ENCODE measurements at regions of chr6 and their contacts with region 1.

Region 1: GRCh38 chr6:139588076-139588639 is 213.7 kb upstream of the CITED2 start:
- DNase-seq: peak; percentile 28
- H3K4me3 ChIP-seq: no peak overlapping the region
- CTCF ChIP-seq: no peak

Region 2: GRCh38 chr6:139375232-139376016 is 212.7 kb before region 1 on chr6:
- in situ Hi-C with region 1: loop called (anchors 5 kb)
- DNase-seq: peak; percentile 97
- H3K4me3 ChIP-seq: peak overlapping the region; percentile 85
- CTCF ChIP-seq: peak; percentile 14

Region 3: DNA sequence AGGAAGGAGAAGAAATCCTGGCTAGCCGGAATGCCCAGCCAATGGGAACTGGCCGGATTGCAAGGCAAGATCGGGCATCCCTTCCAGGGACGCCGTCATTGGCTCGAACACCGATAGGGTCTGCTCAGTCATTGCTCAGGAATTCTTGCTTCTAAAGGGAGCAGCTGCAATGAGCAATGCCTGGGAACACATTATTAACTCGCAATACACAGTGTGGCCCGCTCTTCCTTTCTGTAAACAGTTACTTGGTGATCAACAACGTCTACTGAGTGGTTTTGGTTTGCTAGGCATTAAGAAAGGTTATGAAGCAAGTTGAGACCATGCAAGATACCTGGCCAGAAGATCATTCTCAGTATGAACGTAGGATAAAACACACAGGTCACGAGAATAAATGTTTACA is 48.3 kb before region 1 on chr6:
- in situ Hi-C with region 1: loop called (anchors 5 kb)
- DNase-seq: peak; percentile 76
- H3K4me3 ChIP-seq: no peak overlapping the region
- CTCF ChIP-seq: no peak

Region 4: DNA sequence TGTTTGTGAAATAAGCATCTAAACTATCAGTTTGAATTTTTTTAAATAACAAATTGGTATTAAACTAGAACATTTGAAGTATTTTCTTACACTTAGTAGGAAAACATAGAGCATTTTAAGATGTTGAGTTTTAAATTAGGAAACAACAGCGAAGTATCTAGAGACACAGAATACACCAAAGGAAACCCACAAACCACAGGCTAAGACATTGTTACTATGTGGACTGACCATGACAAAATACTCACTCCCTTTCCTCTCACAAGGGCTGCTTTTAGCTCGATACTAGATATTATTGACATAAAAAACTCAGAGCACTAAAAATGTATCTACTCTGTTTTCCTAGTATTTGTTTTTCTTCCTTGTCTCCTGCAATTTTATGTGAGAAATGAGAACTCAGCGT is 52.3 kb after region 1 on chr6:
- in situ Hi-C with region 1: no loop called
- DNase-seq: peak; percentile 47
- H3K4me3 ChIP-seq: no peak overlapping the region
- CTCF ChIP-seq: no peak

Measured in astrocyte of the cerebellum (primary cell).